Caco-2 (cell line): ENCODE measurements at regions of chr11 and their contacts with region 1.

Region 1: DNA sequence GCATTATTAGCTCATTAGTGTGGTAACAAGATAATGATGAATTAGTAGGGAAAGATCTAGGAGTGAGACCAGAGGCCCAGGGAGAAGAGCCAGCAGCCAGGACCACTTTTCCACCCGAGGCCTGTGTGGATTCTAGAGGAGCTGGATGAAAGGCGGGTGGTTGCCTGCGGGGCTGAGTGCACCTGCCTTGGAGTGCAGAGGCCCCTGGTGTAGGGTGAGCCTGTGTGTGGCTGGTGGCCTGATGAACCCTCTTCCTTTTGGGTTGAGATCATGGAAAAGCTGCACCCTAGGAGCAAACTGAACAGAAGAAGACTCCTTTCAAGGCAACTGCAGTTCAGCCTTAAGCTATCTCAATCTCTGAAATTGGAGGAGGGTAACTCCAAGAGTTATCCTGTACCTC is 5.9 kb upstream of the TP53AIP1 start:
- DNase-seq: peak in 1 of 2 experiments; percentile 61
- H3K4me3 ChIP-seq: no peak overlapping the region
- H3K4me3 Mint-ChIP-seq: no peak overlapping the region
- H3K27ac Mint-ChIP-seq: no peak overlapping the region
- H3K4me1 ChIP-seq: no peaks in the 10 kb centered on the region
- H3K4me1 Mint-ChIP-seq: no peaks in the 10 kb centered on the region
- H3K27me3 ChIP-seq: no peaks in the 10 kb centered on the region
- H3K27me3 Mint-ChIP-seq: peaks cover 12% of the 10 kb centered on the region
- CTCF ChIP-seq: peak; percentile 42 to 77

Region 2: GRCh38 chr11:128884703-128885338 is 63.8 kb before region 1 on chr11:
- CTCF ChIA-PET with region 1: interaction called, 223 read pairs
- POLR2A ChIA-PET with region 1: no interaction called
- intact Hi-C with region 1: loop called (anchors 1 kb)
- DNase-seq: peak; percentile 78 to 91
- H3K4me3 ChIP-seq: no peak overlapping the region
- H3K4me3 Mint-ChIP-seq: no peak overlapping the region
- H3K27ac Mint-ChIP-seq: no peak overlapping the region
- H3K4me1 ChIP-seq: no peaks in the 10 kb centered on the region; the same call in 1 of the 2 replicates
- H3K4me1 Mint-ChIP-seq: no peaks in the 10 kb centered on the region
- H3K27me3 ChIP-seq: no peaks in the 10 kb centered on the region; the same call in none of the 2 replicates
- H3K27me3 Mint-ChIP-seq: peaks cover 33% of the 10 kb centered on the region
- CTCF ChIP-seq: peak; percentile 96 to 97

Region 3: DNA sequence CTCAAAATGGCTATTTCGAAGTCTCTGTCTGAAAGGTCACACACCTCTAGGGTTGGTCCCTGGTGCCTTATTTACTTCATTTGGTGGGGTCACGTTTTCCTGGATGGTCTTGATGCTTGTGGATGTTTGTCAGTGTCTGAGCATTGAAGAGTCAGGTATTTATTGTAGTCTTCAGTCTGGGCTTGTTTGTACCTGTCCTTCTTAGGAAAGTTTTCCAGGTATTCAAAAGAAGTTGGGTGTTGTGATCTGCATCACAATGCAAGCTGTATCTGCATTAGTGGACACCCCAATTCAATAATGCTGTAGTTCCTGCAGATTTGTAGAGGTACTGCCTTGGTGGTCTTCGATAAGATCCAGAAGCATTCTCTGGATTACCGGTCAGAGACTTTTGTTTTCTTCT is 57.6 kb after region 1 on chr11:
- CTCF ChIA-PET with region 1: no interaction called
- POLR2A ChIA-PET with region 1: no interaction called
- intact Hi-C with region 1: no loop called
- DNase-seq: no peak
- H3K4me3 ChIP-seq: no peak overlapping the region
- H3K4me3 Mint-ChIP-seq: no peak overlapping the region
- H3K27ac Mint-ChIP-seq: no peak overlapping the region
- H3K4me1 ChIP-seq: no peaks in the 10 kb centered on the region
- H3K4me1 Mint-ChIP-seq: no peaks in the 10 kb centered on the region
- H3K27me3 ChIP-seq: no peaks in the 10 kb centered on the region
- H3K27me3 Mint-ChIP-seq: no peaks in the 10 kb centered on the region
- CTCF ChIP-seq: no peak